ENCODE measurements at regions of chr14 and their contacts with region 1.

Region 1: GRCh38 chr14:70809543-70810244 is 381 bp upstream of the MAP3K9 start:
- DNase-seq: peak; percentile 96
- ATAC-seq: peak; percentile 93
- H3K4me3 ChIP-seq: peak overlapping the region; percentile 83 to 84 (median 83)
- H3K27ac ChIP-seq: peak overlapping the region; percentile 60
- H3K4me1 ChIP-seq: peaks cover 56% of the 10 kb centered on the region
- H3K27me3 ChIP-seq: no peaks in the 10 kb centered on the region; a peak in 1 of 5 replicates
- CTCF ChIP-seq: no peak
- EP300 ChIP-seq: no peak
- POLR2A ChIP-seq: peak; percentile 62 to 79
- RAD21 ChIP-seq: no peak

Region 2: GRCh38 chr14:70640938-70641547 is 168.7 kb before region 1 on chr14:
- CTCF ChIA-PET with region 1: no interaction called
- POLR2A ChIA-PET with region 1: no interaction called
- in situ Hi-C with region 1: no loop called
- intact Hi-C with region 1: loop called (anchors 5 kb)
- DNase-seq: no peak
- ATAC-seq: peak; percentile 79
- H3K4me3 ChIP-seq: peak overlapping the region; percentile 39 to 73 (median 67); a peak in 5 of 6 replicates
- H3K27ac ChIP-seq: no peak overlapping the region
- H3K4me1 ChIP-seq: peaks cover 12% of the 10 kb centered on the region; the same call in 1 of the 2 replicates
- H3K27me3 ChIP-seq: peaks cover 9 to 44% of the 10 kb centered on the region in 2 experiments
- CTCF ChIP-seq: no peak
- EP300 ChIP-seq: no peak
- POLR2A ChIP-seq: no peak
- RAD21 ChIP-seq: no peak

Region 3: DNA sequence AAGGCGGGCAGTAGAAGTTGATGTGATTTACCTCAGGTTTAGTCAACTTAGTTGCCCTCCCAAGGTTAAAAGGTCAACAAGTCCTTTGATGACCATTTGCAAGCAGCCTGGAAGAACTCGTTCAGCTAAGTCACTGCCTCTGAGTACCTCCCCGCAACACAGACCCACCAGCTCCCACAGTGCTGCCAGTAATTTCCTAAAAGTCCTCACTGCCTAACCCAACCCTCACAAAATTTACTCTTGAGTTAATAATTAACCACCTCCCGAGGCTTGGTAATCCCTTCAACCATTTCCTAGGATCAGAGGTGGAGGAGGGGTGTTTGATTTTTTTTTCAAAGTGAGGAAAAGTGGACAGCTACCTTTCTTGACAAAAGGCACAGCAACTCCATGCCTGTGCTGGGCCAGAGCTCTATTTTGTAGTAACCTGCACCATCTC is 56.2 kb before region 1 on chr14:
- CTCF ChIA-PET with region 1: no interaction called
- POLR2A ChIA-PET with region 1: interaction called, 20 read pairs
- in situ Hi-C with region 1: no loop called
- intact Hi-C with region 1: loop called (anchors 1 kb)
- DNase-seq: peak; percentile 94
- ATAC-seq: peak; percentile 97
- H3K4me3 ChIP-seq: peak overlapping the region in 2 of 3 experiments; percentile 20 to 41; a peak in 3 of 6 replicates
- H3K27ac ChIP-seq: peak overlapping the region; percentile 56
- H3K4me1 ChIP-seq: peaks cover 39% of the 10 kb centered on the region
- H3K27me3 ChIP-seq: no peaks in the 10 kb centered on the region
- CTCF ChIP-seq: no peak
- EP300 ChIP-seq: peak in 1 of 2 experiments; percentile 66; a peak in 1 of 4 replicates
- POLR2A ChIP-seq: no peak
- RAD21 ChIP-seq: no peak

Region 4: DNA sequence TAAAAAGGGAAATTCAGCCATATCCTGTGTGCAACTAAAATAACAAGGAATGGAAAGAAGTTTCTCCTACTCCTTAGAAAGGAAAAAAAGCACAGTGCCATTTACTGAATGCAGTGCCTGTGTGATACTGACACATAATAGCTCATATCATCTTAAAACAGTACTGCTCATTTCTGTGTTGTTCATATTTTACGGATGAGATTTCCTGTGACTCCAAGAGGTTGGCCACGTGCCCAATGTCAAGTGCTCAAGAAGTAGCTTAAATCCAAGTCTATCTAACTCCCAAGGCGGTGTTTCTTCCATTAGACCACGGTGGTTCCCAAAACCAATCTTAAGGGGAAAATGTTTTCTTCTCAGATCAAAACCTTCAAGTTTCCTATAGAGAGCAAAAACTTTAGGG is 20.3 kb before region 1 on chr14:
- CTCF ChIA-PET with region 1: no interaction called
- POLR2A ChIA-PET with region 1: no interaction called
- in situ Hi-C with region 1: no loop called
- intact Hi-C with region 1: no loop called
- DNase-seq: no peak
- ATAC-seq: no peak
- H3K4me3 ChIP-seq: no peak overlapping the region
- H3K27ac ChIP-seq: no peak overlapping the region
- H3K4me1 ChIP-seq: peaks cover 7% of the 10 kb centered on the region
- H3K27me3 ChIP-seq: no peaks in the 10 kb centered on the region
- CTCF ChIP-seq: no peak
- EP300 ChIP-seq: no peak
- POLR2A ChIP-seq: no peak
- RAD21 ChIP-seq: no peak

Region 5: GRCh38 chr14:70821584-70822529 is 12.2 kb after region 1 on chr14:
- CTCF ChIA-PET with region 1: no interaction called
- POLR2A ChIA-PET with region 1: interaction called, 4 read pairs
- in situ Hi-C with region 1: no loop called
- intact Hi-C with region 1: loop called (anchors 1 kb)
- DNase-seq: no peak
- ATAC-seq: peak; percentile 69
- H3K4me3 ChIP-seq: peak overlapping the region; percentile 58 to 83 (median 67)
- H3K27ac ChIP-seq: no peak overlapping the region
- H3K4me1 ChIP-seq: peaks cover 17% of the 10 kb centered on the region
- H3K27me3 ChIP-seq: peaks cover 0 to 38% of the 10 kb centered on the region in 2 experiments; a peak in 3 of 5 replicates
- CTCF ChIP-seq: no peak
- EP300 ChIP-seq: no peak
- POLR2A ChIP-seq: no peak
- RAD21 ChIP-seq: no peak

Measured in HepG2 (cell line).